ENCODE measurements at regions of chr1 and their contacts with region 1.

Region 1: DNA sequence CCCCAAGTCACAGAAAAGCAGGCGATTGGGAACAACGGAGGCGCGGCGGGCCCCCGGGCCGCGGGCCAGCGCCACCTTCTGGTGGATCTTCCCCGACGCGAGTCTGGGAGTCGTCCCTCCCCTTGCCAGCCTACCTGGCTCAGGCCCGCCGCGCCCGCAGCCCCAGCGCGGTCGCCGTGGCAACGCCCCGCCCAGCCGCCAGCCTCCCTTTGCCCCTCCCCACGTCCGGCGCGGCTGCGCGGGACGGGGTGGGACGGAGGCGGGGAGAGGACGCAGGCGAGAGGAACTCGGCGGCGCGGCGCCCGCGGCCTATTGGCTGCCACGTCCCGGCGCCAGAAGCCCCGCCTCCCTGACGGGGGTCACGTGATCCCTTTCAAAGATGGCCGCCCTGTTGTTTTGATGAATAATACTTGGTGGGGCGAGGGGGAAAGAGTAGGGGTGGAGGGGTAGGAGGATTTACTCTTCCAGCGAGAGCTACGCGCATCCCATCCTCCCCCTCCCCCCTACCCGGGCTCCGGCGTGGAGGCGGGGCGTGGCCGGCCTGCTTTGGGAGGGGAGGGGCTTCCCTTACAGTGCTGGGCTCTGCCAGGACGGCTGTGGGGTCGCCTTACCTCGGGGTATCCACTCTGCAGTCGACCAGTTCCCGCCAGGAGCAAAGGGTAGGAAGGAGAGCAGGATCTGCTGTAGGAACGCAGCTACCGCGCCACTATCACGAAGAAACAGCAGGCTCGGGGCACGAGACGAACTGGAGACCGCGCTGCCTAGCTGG is at the start of gene UBE4B:
- DNase-seq: peak; percentile 96 to 100 (median 99)
- ATAC-seq: peak; percentile 93
- H3K4me3 ChIP-seq: peak within 1 kb of the TSS; percentile 99
- H3K4me3 Mint-ChIP-seq: peak within 1 kb of the TSS; percentile 98
- H3K27ac ChIP-seq: peak within 1 kb of the TSS; percentile 91 to 95
- H3K27ac Mint-ChIP-seq: peak within 1 kb of the TSS; percentile 99
- H3K4me1 ChIP-seq: peaks cover 28% of the 10 kb centered on the region
- H3K4me1 Mint-ChIP-seq: peaks cover 30% of the 10 kb centered on the region
- H3K27me3 ChIP-seq: no peaks in the 10 kb centered on the region
- H3K27me3 Mint-ChIP-seq: no peaks in the 10 kb centered on the region
- CTCF ChIP-seq: peak; percentile 74
- total RNA-seq, gene UBE4B: 27.9 to 28.7 TPM

Region 2: DNA sequence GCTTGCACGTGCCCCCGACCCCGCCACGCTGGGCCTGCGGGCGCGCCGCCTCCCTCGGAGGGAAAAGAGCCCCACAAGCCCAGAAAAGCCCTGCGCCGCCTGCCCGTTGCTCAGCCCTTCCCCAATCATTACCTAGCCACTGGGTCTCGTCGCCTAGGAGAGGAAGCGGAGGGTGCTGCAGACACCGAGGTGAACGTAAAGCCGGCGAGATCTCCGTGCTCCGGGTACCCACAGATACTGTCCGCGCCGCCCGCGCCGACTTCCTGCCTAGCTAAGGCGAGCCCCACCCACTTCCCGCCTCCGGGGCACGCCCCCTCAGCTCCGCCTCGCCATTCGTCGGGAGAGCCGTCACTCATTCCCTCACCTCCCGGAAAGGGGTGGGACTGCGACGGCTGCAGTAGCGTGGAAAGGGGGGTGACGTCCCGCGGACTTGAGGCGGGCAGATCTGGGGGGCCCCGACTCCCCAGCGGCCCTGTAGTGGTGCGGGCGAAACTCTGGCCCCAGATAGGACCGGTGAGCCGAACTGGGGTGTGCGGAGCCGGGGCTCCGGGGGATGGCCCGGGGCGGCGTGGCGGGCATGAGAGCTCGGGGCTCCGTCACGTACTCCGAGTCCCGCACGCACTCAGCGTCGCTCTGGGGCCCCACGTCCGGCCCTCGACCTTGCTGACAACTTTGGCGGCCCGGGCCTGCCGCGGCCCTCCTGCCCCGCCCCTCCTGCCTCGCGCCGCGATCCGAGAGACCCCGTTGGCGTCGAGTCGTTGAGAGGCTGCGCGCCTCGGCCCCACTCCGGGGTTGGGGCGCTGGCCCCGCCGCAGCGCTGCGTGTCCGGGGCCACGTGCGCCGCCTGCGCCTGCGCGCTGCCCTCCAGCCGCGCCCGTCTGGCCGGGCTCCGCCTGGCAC is 1154.1 kb before region 1 on chr1 and contains the start of gene ENO1:
- CTCF ChIA-PET with region 1: no interaction called
- POLR2A ChIA-PET with region 1: no interaction called
- intact Hi-C with region 1: loop called in 1 of 2 experiments (anchors 5 kb)
- DNase-seq: peak; percentile 97 to 100 (median 99)
- ATAC-seq: peak; percentile 82
- H3K4me3 ChIP-seq: peak within 1 kb of the TSS; percentile 90
- H3K4me3 Mint-ChIP-seq: peak within 1 kb of the TSS; percentile 98
- H3K27ac ChIP-seq: peak within 1 kb of the TSS; percentile 96 to 97
- H3K27ac Mint-ChIP-seq: peak within 1 kb of the TSS; percentile 92
- H3K4me1 ChIP-seq: peaks cover 53% of the 10 kb centered on the region
- H3K4me1 Mint-ChIP-seq: peaks cover 52% of the 10 kb centered on the region
- H3K27me3 ChIP-seq: no peaks in the 10 kb centered on the region
- H3K27me3 Mint-ChIP-seq: no peaks in the 10 kb centered on the region
- CTCF ChIP-seq: no peak
- total RNA-seq, gene ENO1: 120 to 129 TPM

Region 3: DNA sequence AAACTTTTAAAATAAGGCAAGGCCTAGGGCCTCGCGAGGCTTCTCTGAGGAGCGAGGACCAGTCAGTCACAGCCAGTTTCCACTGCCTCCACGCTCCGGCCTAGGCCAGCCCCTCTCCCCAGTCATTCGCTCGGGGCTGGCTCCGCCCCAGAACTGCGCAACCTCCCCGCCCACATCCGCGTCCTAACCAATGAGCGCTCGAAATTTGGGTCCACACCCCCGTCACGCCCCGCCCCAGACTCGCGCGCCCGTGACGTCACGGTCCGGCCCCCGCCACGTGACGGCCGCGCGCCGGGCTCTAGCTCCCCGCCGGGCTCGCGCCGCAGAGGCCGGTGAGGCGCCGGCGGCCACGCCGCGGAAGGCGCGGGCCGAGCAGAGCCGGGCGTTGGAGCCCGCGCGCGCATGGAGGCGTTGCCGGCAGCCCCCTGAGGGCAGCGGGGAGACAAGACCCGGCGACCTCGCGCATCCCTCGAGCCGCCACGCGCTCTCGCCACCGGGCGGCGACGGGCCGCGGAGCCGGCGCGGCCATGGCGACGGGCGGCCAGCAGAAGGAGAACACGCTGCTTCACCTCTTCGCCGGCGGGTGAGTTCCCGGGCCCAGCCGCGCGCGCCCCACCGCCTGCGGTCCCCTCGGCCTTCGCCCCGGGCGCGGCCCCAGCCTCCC is 493.5 kb before region 1 on chr1 and contains the start of gene SLC25A33:
- CTCF ChIA-PET with region 1: no interaction called
- POLR2A ChIA-PET with region 1: no interaction called
- intact Hi-C with region 1: loop called in 1 of 2 experiments (anchors 5 kb)
- DNase-seq: peak; percentile 92 to 98 (median 95)
- ATAC-seq: peak; percentile 97
- H3K4me3 ChIP-seq: peak within 1 kb of the TSS; percentile 70
- H3K4me3 Mint-ChIP-seq: peak within 1 kb of the TSS; percentile 91
- H3K27ac ChIP-seq: peak within 1 kb of the TSS in 1 of 2 donors; percentile 69
- H3K27ac Mint-ChIP-seq: peak within 1 kb of the TSS; percentile 90
- H3K4me1 ChIP-seq: peaks cover 33% of the 10 kb centered on the region
- H3K4me1 Mint-ChIP-seq: peaks cover 33% of the 10 kb centered on the region
- H3K27me3 ChIP-seq: no peaks in the 10 kb centered on the region
- H3K27me3 Mint-ChIP-seq: no peaks in the 10 kb centered on the region
- CTCF ChIP-seq: no peak
- total RNA-seq, gene SLC25A33: 5.9 to 6.6 TPM

Region 4: DNA sequence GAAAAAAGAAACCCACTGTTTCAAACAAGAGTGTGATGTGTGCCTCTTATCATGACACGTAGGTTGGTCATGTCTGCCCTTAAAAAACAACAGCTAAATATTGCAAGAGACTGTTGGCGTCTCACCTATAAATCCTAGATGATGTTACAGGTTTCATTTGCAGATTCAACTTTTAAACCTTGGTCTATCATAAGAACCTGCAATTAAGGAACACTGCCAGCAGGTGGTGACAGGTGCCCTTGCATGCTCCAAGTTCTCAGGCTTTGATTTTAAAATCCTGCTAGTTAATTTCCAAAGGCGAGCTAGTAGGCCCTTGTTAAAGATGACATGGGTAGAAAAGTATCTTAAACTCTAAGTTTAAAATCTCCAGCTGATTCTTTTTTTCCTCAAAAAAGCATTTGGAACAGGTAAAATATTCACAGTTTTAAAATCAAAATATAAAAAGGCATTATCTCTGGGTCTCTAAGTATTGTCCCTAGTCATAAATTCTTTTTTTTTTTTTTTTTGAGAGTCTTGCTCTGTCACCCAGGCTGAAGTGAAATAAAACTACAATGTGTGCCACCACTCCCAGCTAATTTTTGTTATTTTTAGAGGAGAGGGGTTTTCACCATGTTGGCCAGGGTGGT is 248.2 kb before region 1 on chr1:
- CTCF ChIA-PET with region 1: no interaction called
- POLR2A ChIA-PET with region 1: no interaction called
- intact Hi-C with region 1: loop called in 1 of 2 experiments (anchors 5 kb)
- DNase-seq: peak; percentile 39 to 86 (median 58)
- ATAC-seq: peak; percentile 45
- H3K4me3 ChIP-seq: no peak overlapping the region
- H3K4me3 Mint-ChIP-seq: peak overlapping the region; percentile 62
- H3K27ac ChIP-seq: no peak overlapping the region
- H3K27ac Mint-ChIP-seq: peak overlapping the region; percentile 79
- H3K4me1 ChIP-seq: peaks cover 21% of the 10 kb centered on the region
- H3K4me1 Mint-ChIP-seq: peaks cover 36% of the 10 kb centered on the region
- H3K27me3 ChIP-seq: no peaks in the 10 kb centered on the region
- H3K27me3 Mint-ChIP-seq: no peaks in the 10 kb centered on the region
- CTCF ChIP-seq: peak; percentile 83

Region 5: GRCh38 chr1:9942939-9943788 is 89.6 kb before region 1 on chr1 and contains the starts of genes LZIC and NMNAT1:
- CTCF ChIA-PET with region 1: no interaction called
- POLR2A ChIA-PET with region 1: interaction called, 5 read pairs
- intact Hi-C with region 1: loop called in 1 of 2 experiments (anchors 2 kb)
- DNase-seq: peak; percentile 76 to 94 (median 85)
- ATAC-seq: peak; percentile 92
- H3K4me3 ChIP-seq: peak within 1 kb of the TSS; percentile 99
- H3K4me3 Mint-ChIP-seq: peak within 1 kb of the TSS; percentile 98
- H3K27ac ChIP-seq: peak within 1 kb of the TSS; percentile 73 to 90
- H3K27ac Mint-ChIP-seq: peak within 1 kb of the TSS; percentile 91
- H3K4me1 ChIP-seq: peaks cover 23% of the 10 kb centered on the region
- H3K4me1 Mint-ChIP-seq: peaks cover 20% of the 10 kb centered on the region
- H3K27me3 ChIP-seq: no peaks in the 10 kb centered on the region
- H3K27me3 Mint-ChIP-seq: no peaks in the 10 kb centered on the region
- CTCF ChIP-seq: no peak
- total RNA-seq, gene LZIC: 16.0 to 18.1 TPM
- total RNA-seq, gene NMNAT1: 0.66 to 1.0 TPM

Region 6: GRCh38 chr1:9996624-9997582 is 35.9 kb before region 1 on chr1 and contains the start of gene RBP7:
- CTCF ChIA-PET with region 1: no interaction called
- POLR2A ChIA-PET with region 1: no interaction called
- intact Hi-C with region 1: no loop called
- DNase-seq: peak in 7 of 14 experiments; percentile 1 to 39 (median 3)
- ATAC-seq: no peak
- H3K4me3 ChIP-seq: peak within 1 kb of the TSS; percentile 12
- H3K4me3 Mint-ChIP-seq: peak within 1 kb of the TSS; percentile 86
- H3K27ac ChIP-seq: no peak within 1 kb of the TSS
- H3K27ac Mint-ChIP-seq: no peak within 1 kb of the TSS
- H3K4me1 ChIP-seq: peaks cover 16% of the 10 kb centered on the region
- H3K4me1 Mint-ChIP-seq: peaks cover 6% of the 10 kb centered on the region
- H3K27me3 ChIP-seq: peaks cover 22 to 34% of the 10 kb centered on the region in 2 experiments
- H3K27me3 Mint-ChIP-seq: peaks cover 50% of the 10 kb centered on the region
- CTCF ChIP-seq: no peak
- total RNA-seq, gene RBP7: 0.70 TPM in 1 of 2 experiments, not detected in the other

Region 7: GRCh38 chr1:10430216-10431069 is 397.7 kb after region 1 on chr1 and contains the start of gene CENPS:
- CTCF ChIA-PET with region 1: no interaction called
- POLR2A ChIA-PET with region 1: no interaction called
- intact Hi-C with region 1: loop called in 1 of 2 experiments (anchors 1 kb)
- DNase-seq: peak; percentile 72 to 95 (median 90)
- ATAC-seq: peak; percentile 79
- H3K4me3 ChIP-seq: peak within 1 kb of the TSS; percentile 71
- H3K4me3 Mint-ChIP-seq: peak within 1 kb of the TSS; percentile 94
- H3K27ac ChIP-seq: peak within 1 kb of the TSS; percentile 65 to 68
- H3K27ac Mint-ChIP-seq: peak within 1 kb of the TSS; percentile 92
- H3K4me1 ChIP-seq: peaks cover 26% of the 10 kb centered on the region
- H3K4me1 Mint-ChIP-seq: peaks cover 23% of the 10 kb centered on the region
- H3K27me3 ChIP-seq: no peaks in the 10 kb centered on the region
- H3K27me3 Mint-ChIP-seq: no peaks in the 10 kb centered on the region
- CTCF ChIP-seq: peak; percentile 98
- total RNA-seq, gene CENPS: 3.7 to 4.0 TPM

Region 8: GRCh38 chr1:10484521-10484920 is 451.7 kb after region 1 on chr1:
- CTCF ChIA-PET with region 1: no interaction called
- POLR2A ChIA-PET with region 1: no interaction called
- intact Hi-C with region 1: no loop called
- DNase-seq: no peak
- ATAC-seq: no peak
- H3K4me3 ChIP-seq: no peak overlapping the region
- H3K4me3 Mint-ChIP-seq: no peak overlapping the region
- H3K27ac ChIP-seq: no peak overlapping the region
- H3K27ac Mint-ChIP-seq: no peak overlapping the region
- H3K4me1 ChIP-seq: no peaks in the 10 kb centered on the region
- H3K4me1 Mint-ChIP-seq: peaks cover 19% of the 10 kb centered on the region
- H3K27me3 ChIP-seq: no peaks in the 10 kb centered on the region
- H3K27me3 Mint-ChIP-seq: no peaks in the 10 kb centered on the region
- CTCF ChIP-seq: no peak

Region 9: GRCh38 chr1:11805447-11806306 is 1772.9 kb after region 1 on chr1 and contains the starts of genes CLCN6 and MTHFR:
- CTCF ChIA-PET with region 1: no interaction called
- POLR2A ChIA-PET with region 1: no interaction called
- intact Hi-C with region 1: loop called in 1 of 2 experiments (anchors 5 kb)
- DNase-seq: peak; percentile 93 to 99 (median 97)
- ATAC-seq: peak; percentile 85
- H3K4me3 ChIP-seq: peak within 1 kb of the TSS; percentile 98
- H3K4me3 Mint-ChIP-seq: peak within 1 kb of the TSS; percentile 99
- H3K27ac ChIP-seq: peak within 1 kb of the TSS; percentile 86 to 92
- H3K27ac Mint-ChIP-seq: peak within 1 kb of the TSS; percentile 91
- H3K4me1 ChIP-seq: peaks cover 58% of the 10 kb centered on the region
- H3K4me1 Mint-ChIP-seq: peaks cover 66% of the 10 kb centered on the region
- H3K27me3 ChIP-seq: no peaks in the 10 kb centered on the region
- H3K27me3 Mint-ChIP-seq: no peaks in the 10 kb centered on the region
- CTCF ChIP-seq: no peak
- total RNA-seq, gene CLCN6: 10.9 to 11.2 TPM
- total RNA-seq, gene MTHFR: 30.8 to 31.3 TPM